OCI-LY7 (cell line): ENCODE measurements at regions of chr14 and their contacts with region 1.

Region 1: GRCh38 chr14:75176142-75176820 is at the start of gene TMED10:
- DNase-seq: peak; percentile 95
- H3K4me3 ChIP-seq: peak within 1 kb of the TSS; percentile 77
- H3K27ac ChIP-seq: peak within 1 kb of the TSS; percentile 88
- H3K4me1 ChIP-seq: peaks cover 35% of the 10 kb centered on the region
- CTCF ChIP-seq: no peak
- total RNA-seq, gene TMED10: 63.1 and 129 TPM in 2 replicates

Region 2: DNA sequence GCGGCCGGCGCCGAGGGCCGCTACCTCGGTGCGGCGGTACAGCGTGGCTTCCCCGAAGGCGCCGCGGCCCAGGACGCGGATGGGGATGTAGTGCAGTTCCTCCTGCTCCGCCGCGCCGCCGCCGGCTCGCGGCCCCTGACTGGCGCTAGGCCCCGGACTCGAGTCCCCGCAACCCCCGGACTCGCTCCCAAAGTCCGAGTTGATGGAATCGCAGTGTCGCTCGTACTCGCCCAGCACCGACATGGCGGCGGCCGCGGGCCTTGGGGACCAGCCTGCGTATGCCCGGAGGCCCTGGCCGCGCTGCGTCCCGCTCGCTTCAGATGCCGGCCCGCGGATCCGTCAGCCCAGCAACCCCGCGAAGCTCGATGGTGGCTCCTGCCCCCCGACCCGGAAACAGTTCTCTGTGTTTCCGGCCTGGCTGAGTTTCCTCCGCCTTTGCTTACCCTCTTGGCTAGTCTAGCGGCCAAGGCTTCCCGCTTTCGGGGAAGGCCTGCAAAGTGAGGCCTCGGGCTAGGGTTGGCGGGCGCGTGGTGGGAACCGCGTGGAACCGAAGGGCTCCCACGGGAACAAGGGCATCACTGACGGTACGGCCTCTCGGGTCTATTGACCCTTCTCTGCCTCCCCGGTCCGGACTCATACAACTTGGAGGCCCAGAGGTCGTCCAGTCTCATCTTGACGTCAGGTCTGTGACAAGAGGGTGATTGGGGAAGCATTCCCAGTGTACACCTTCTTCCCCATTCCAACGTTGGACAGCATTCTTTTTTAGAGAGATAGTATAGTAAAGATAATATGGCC is 49.4 kb before region 1 on chr14 and contains the start of gene NEK9:
- CTCF ChIA-PET with region 1: no interaction called
- POLR2A ChIA-PET with region 1: interaction called, 3 read pairs
- intact Hi-C with region 1: loop called (anchors 2 kb)
- DNase-seq: peak; percentile 92
- H3K4me3 ChIP-seq: peak within 1 kb of the TSS; percentile 78
- H3K27ac ChIP-seq: peak within 1 kb of the TSS; percentile 69
- H3K4me1 ChIP-seq: peaks cover 28% of the 10 kb centered on the region
- CTCF ChIP-seq: 0 out of 2 replicates have a peak, but pooled peaks have one; percentile 24
- total RNA-seq, gene NEK9: 58.3 and 65.8 TPM in 2 replicates

Region 3: GRCh38 chr14:75278422-75279161 is 102.3 kb after region 1 on chr14 and contains the start of gene FOS:
- CTCF ChIA-PET with region 1: no interaction called
- POLR2A ChIA-PET with region 1: no interaction called
- intact Hi-C with region 1: loop called (anchors 5 kb)
- DNase-seq: peak; percentile 92
- H3K4me3 ChIP-seq: peak within 1 kb of the TSS; percentile 68
- H3K27ac ChIP-seq: peak within 1 kb of the TSS; percentile 17
- H3K4me1 ChIP-seq: peaks cover 32% of the 10 kb centered on the region
- CTCF ChIP-seq: no peak
- total RNA-seq, gene FOS: 12.4 and 16.9 TPM in 2 replicates